GM13976 (cell line): ENCODE measurements at regions of chr11 and their contacts with region 1.

Region 1: DNA sequence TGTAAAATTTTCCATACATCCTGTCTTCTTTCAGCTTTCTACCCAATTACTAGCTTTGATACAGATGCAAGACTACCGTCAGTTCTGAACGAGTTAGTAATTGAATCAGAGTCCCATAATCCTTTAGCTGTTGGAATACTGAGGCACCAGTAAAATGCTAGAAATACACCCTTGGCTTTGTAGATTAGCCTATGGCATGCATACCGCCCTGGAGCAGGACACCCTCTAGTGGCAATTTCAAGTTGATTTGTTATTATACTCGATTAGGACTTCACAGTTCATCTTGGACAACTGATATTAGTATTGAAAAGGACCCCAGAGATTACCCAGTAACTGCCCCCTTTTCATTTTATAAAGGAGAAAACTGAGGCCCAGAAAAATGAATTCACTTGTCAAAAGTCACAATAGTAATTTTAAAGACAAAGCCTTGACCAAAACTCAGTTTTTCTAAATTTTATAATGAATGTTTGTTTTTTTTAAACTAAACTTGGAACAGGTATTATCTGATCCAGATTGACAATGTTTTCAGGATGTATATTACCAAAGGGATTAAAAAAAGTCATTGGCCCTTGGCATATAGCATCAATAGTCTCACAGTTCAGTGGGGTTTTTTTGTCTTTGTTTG is 72.6 kb downstream of the HIPK3 start:
- DNase-seq: peak; percentile 38
- CTCF ChIP-seq: peak; percentile 32

Region 2: GRCh38 chr11:32960553-32961164 is 369.2 kb before region 1 on chr11:
- in situ Hi-C with region 1: loop called (anchors 25 kb)
- DNase-seq: peak; percentile 51
- CTCF ChIP-seq: peak; percentile 26

Region 3: DNA sequence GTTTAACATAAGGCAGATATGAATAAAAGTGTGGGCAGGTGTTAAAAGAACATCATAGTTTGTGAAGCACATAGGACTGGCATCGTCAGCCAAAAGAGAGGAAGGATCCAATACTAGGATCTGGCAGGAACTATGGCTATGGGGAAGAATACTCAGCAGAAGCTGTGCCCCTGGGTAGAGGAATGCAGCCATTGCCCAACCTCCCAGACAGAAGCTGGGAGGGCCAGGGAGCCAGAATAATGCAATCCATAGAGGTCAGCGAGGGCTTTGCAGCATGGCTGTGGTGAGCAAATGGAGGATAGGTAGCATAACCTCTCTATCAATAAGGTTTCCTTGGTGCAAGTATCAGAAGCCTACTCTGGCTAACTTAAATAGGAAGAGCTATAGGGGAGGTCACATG is 156.8 kb before region 1 on chr11:
- in situ Hi-C with region 1: loop called (anchors 10 kb)
- DNase-seq: no peak
- CTCF ChIP-seq: no peak

Region 4: GRCh38 chr11:33237039-33237597 is 92.7 kb before region 1 on chr11:
- in situ Hi-C with region 1: no loop called
- DNase-seq: no peak
- CTCF ChIP-seq: no peak